Right ventricle myocardium superior (tissue), 1 donor: ENCODE measurements at regions of chr6 and their contacts with region 1.

Region 1: DNA sequence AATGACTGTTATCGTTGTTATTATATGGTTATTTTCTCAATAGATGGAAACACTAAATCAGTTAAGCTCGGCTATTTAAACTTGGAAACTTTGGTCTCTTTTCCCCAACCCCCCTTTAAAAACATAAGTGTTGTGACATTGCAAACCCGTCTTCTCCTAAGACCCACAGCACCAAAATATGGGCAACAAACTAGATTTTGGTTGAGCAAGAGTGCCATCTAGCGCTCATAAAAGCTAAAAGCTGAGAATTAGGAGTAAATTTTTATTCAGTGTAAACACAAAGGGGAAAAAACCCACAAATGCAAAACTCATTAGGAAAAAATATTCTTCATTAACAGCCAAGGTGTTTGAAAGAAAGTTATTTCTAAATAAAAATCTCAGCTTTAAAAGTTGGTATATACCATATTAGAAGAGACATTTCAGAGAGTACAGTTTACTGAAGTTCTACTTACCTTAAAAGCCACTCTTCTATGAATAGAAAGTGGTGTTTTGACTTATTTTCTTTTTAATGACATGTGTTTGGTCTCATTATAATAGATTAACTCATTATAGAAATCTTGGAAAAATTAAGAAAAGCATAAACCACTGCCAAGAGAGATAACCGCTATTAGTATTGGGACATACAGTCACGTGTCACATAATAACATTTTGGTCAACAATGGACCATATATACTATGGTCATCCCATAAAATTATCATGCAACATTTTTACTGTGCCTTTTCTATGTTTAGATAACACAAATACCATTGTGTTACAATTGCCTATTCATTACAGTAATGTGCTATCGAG is 21.1 kb downstream of the SESN1 start:
- DNase-seq: no peak
- ATAC-seq: peak; percentile 66

Region 2: GRCh38 chr6:108541838-108542759 is 531.4 kb before region 1 on chr6:
- intact Hi-C with region 1: loop called (anchors 5 kb)
- DNase-seq: peak; percentile 67
- ATAC-seq: peak; percentile 91

Region 3: DNA sequence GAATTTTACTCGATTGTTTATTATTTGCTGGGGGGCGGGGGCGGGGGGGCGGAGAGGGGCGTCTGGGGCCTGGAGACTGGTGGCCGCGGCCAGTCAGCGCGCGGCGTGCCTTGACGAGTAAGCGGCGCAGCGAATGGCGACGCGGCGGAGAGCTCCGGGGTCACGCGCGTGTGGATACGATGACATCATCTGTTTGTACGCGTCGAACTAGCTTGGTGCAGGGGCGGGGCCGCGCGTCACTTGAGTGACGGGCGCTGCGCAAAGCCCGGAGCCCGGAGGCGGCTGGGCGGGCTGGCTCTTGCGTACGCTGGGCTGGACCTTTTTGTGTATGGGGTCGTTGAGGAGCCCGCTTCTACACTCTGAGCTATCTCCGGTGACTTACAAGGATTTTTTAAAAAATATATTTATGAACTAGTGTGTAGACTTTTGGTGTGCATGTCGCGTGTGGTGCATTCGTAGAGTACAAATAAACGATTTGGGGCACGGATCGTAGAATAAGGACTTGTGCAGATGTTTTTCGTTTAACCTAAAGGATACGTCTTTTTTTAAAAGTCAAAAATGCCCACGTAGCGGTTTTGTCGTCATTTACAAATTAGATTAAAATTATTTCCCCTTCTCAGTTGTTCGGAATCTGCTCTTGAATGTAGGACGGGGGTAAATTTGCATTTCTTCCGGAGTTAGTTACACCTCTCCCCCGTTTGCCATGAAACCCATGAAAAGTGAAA is 515.0 kb before region 1 on chr6:
- intact Hi-C with region 1: loop called (anchors 5 kb)
- DNase-seq: peak; percentile 99
- ATAC-seq: peak; percentile 65

Region 4: DNA sequence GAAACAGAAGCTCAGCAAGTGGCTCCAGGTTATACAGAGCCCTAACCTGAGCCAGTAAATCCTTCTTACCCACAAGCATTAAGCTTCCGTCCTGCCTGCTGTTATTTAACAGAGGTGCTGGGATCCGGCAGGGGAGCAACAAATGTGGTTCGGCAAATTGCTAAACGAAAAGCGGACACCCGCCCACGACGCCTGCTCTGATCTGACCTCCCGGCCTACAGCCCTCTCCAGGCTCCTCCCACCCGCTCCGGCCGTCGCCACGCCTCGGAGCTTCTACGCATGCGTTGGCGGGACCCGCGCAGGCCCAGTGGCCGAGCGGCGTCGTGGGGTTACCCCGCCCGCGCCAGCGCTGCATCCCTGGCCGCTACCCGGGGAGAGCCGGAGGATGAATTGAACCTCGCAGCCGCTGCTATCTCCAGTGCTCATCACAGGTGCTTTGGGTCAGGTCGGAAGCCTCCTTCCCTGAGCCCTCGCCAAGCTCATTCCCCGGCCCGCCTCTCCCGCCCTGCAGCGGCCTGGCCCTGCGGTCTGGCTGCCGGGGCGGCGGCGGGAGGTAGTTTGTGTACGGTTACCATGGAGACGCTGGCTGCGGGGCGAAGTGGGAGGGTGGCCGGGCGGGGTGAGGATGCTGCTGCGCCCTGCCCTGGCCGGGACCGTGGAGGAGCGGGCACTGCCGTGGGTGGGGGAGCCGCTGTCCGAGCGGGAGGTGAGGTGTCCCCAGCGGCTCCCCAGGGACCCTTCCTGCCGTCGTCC is 225.2 kb before region 1 on chr6 and contains the start of gene ARMC2:
- intact Hi-C with region 1: loop called (anchors 5 kb)
- DNase-seq: peak; percentile 97
- ATAC-seq: peak; percentile 98
- total RNA-seq, gene ARMC2: 9.5 TPM

Region 5: DNA sequence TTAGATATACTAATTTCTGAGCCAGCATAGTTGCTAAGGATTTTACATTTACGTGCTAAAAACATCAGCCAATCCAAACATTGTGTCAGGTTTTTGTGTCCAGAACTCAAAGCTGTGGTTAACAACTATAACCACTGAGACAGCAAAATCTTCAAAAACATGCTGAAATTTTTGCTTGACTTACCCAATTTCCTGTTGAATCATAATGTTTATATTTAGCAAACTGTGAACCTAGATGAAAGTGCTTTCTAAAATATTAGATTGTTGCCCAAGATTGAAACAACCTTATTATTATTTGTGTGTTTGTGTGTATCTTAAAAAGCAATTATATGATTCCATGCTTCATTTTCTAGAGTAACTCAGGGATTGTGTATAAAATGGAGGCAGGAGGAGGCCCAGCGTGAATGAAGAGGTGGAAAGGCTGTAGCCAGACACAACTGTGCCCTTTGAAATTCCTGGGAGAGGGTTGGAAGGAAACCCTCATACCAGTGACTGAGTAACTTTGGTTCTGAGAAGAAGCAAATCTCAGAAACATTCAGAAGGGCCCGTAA is 177.4 kb before region 1 on chr6:
- intact Hi-C with region 1: loop called (anchors 5 kb)
- DNase-seq: no peak
- ATAC-seq: peak; percentile 28